PC-9 (cell line): ENCODE measurements at regions of chr1 and their contacts with region 1.

Region 1: DNA sequence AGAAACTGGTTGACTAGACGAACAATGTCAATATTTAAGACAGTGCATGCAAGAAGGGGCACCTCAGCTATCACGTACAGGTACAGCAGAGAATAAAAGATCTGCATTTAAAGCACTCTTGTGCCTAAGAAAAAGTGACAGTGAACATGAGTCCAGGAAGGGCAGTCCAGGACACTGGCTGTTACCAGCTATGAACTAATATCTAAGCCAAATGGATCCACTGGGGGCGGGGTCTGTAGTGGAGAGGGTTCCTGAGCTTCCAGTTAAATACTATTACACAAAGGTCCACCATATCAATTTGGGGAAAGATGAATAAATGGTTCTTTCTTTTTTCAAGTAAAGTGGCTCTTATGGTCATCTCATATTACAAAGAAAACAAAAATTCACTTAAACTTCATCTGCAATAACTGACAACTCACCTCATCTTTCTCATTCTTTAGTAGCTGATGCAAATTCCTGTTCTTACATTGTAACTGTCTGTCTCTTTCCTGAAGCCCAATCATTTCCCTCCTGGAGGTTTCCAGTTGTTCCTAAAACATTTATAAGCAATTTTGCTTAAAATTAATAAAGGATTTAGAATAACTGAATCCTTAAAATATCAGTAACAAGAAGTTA is 24.5 kb downstream of the SSX2IP start:
- DNase-seq: no peak
- H3K4me3 ChIP-seq: no peak overlapping the region
- H3K27ac ChIP-seq: no peak overlapping the region
- H3K4me1 ChIP-seq: no peaks in the 10 kb centered on the region
- H3K27me3 ChIP-seq: no peaks in the 10 kb centered on the region
- CTCF ChIP-seq: no peak

Region 2: DNA sequence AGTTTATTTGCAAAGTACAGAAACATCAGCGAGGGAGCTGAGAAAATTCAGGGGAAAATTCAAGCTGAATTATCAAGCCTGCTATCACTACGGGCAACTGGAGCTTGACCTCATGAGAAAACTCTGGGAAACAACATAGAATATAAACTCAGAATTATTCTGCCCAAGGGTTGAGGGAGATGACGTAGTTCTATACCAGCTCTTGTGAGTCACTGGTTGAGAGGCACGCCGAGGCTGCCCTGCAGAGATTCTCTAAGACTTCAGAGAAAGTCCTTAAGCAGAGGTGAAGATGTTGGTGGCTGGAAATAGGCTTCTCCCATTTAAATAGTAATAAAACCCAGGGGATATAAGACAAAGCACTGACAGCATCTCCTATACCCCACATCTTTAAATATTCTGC is 522.7 kb after region 1 on chr1:
- CTCF ChIA-PET with region 1: no interaction called
- POLR2A ChIA-PET with region 1: interaction called, 11 read pairs
- intact Hi-C with region 1: no loop called
- DNase-seq: no peak
- H3K4me3 ChIP-seq: no peak overlapping the region
- H3K27ac ChIP-seq: no peak overlapping the region
- H3K4me1 ChIP-seq: no peaks in the 10 kb centered on the region
- H3K27me3 ChIP-seq: no peaks in the 10 kb centered on the region
- CTCF ChIP-seq: no peak